Activated T-helper 1 cell treated with anti-CD3 and anti-CD28 coated beads, Interleukin-12 subunit alpha, Interleukin-12 subunit beta, Interleukin-2, Interleukin-4 antibody, amounts not matched to agents 30 ng/mL and 10 ng/mL and 1 ng/mL, durations not matched to agents 14 hours and 24 hours and 36 hours (primary cell): ENCODE measurements at regions of chr9 and their contacts with region 1.

Region 1: GRCh38 chr9:100598641-100599145 is 20.8 kb downstream of the CAVIN4 start:
- DNase-seq: peak; percentile 70
- H3K4me3 Mint-ChIP-seq: peak overlapping the region; percentile 78
- H3K27ac Mint-ChIP-seq: no peak overlapping the region
- H3K4me1 Mint-ChIP-seq: peaks cover 15% of the 10 kb centered on the region
- H3K27me3 Mint-ChIP-seq: peaks cover 20% of the 10 kb centered on the region

Region 2: GRCh38 chr9:99162759-99163364 is 1435.8 kb before region 1 on chr9:
- intact Hi-C with region 1: loop called (anchors 2 kb)
- DNase-seq: no peak
- H3K4me3 Mint-ChIP-seq: no peak overlapping the region
- H3K27ac Mint-ChIP-seq: no peak overlapping the region
- H3K4me1 Mint-ChIP-seq: peaks cover 25% of the 10 kb centered on the region
- H3K27me3 Mint-ChIP-seq: peaks cover 9% of the 10 kb centered on the region

Region 3: GRCh38 chr9:99906403-99907207 is 692.1 kb before region 1 on chr9 and contains the start of gene STX17:
- intact Hi-C with region 1: loop called (anchors 5 kb)
- DNase-seq: peak; percentile 72
- H3K4me3 Mint-ChIP-seq: peak within 1 kb of the TSS; percentile 96
- H3K27ac Mint-ChIP-seq: peak within 1 kb of the TSS; percentile 96
- H3K4me1 Mint-ChIP-seq: peaks cover 33% of the 10 kb centered on the region
- H3K27me3 Mint-ChIP-seq: peaks cover 13% of the 10 kb centered on the region
- total RNA-seq, gene STX17: 20.5 and 22.1 TPM in 2 replicates

Region 4: DNA sequence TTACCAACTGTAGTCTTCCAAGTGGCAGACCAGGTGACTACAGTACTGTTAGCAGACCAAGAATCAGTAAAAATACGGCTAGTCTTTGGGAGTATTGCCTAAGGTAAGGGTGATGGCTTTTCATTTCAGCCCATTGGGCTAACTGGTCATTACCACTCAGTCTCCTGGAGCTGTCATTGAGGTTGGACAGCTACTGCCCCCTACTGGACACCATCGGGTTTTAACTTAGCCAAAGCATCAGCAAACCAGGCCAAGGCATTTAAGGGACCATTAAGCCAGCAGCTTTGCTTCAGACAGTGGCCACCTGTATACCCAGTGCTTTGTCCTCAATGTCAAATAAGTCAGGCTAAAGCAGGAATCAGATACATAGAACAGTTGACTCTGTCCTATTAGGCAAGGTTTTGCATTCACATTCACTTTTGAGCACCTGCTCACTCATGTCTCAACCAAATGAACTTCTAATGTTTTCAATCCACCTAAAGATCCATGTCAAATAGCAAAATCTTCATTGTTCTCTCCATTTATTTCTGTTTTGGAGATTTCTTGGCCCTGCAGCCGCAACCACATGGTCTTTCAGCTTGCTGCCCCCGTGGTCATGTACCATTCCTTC is 382.4 kb before region 1 on chr9:
- intact Hi-C with region 1: loop called (anchors 1 kb)
- DNase-seq: peak; percentile 46
- H3K4me3 Mint-ChIP-seq: no peak overlapping the region
- H3K27ac Mint-ChIP-seq: no peak overlapping the region
- H3K4me1 Mint-ChIP-seq: peaks cover 12% of the 10 kb centered on the region
- H3K27me3 Mint-ChIP-seq: no peaks in the 10 kb centered on the region

Region 5: DNA sequence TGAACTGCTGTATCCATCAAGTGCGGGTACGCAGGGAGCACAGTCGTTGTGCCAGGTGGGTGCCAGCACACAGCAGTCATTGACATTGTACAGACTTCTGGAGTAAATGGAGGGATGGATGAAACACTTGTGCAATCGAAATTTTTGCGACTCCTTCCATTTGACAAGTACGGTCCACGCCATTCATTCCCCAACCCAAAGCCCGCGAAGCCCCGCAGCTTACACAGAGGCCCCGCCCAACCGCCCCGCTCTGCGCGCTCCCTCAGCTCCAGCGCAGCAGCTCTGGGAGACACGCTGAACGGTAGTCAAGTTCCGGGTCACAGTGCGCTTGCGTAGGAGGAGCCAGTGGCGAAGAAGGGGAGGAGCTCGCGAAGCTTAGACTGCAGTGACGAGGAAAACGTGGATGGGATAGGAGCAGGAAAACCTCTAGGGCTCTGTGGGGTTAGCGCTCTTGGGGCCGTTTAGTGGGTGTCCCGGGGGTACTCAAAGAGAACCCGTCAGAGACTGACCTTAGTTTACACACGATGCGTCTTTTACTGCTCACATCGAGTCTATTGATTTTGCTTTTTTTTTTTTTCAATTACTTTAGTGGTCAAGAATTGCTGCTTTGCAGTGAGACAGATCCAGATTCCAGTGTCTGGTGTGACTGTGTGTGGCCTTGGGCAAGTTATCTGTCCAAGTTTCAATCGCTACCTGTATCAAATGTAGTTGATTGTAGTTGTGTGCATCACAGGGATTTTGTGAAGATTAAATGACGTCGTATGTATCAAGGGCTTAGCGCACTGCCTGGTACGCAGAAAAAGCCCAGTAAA is 187.0 kb before region 1 on chr9:
- intact Hi-C with region 1: loop called (anchors 1 kb)
- DNase-seq: peak; percentile 81
- H3K4me3 Mint-ChIP-seq: peak overlapping the region; percentile 83
- H3K27ac Mint-ChIP-seq: peak overlapping the region; percentile 65
- H3K4me1 Mint-ChIP-seq: peaks cover 13% of the 10 kb centered on the region
- H3K27me3 Mint-ChIP-seq: peaks cover 11% of the 10 kb centered on the region

Region 6: DNA sequence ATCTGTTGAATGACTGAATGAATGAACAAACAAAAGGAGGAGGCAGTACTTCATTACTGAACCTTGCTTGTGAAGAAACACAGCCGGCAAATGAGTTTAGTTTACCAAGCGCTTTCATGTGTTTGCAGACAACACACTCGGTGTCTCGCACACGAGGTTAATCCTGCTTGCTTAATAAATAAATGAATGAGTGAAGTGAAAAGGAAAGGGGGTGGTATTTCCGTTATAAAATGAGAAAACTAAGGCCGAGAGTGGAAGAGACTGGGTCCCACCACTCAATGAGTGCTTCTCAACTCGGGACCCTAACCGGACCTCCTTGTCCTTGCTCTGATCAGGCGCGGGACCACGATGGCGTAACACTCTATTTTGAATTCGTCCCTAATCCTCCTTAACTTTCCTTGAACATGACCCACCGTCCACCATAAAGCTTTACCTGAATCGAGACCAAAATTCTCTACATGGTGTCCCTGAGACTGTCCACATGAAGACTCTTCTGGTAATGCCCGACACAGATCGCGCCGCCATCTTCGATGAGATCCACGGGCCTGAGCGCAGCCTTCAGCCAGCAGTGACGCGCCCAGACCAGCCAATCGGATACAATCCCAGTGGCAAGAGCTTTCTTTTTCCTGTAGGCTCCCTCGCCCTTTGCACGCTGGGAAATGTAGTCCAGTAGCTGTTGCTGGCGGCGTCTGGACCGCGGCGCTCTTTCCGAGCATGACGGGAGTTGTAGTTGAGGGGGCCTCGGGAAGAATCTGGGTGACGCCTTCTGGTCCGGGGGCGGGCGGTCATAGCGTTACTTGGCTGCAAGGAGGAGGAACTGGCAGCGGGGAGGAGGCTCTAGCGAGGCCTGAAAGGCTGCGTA is 799.6 kb after region 1 on chr9 and contains the starts of genes MRPL50 and ZNF189:
- intact Hi-C with region 1: loop called (anchors 1 kb)
- DNase-seq: peak; percentile 95
- H3K4me3 Mint-ChIP-seq: peak within 1 kb of the TSS; percentile 98
- H3K27ac Mint-ChIP-seq: peak within 1 kb of the TSS; percentile 99
- H3K4me1 Mint-ChIP-seq: peaks cover 45% of the 10 kb centered on the region
- H3K27me3 Mint-ChIP-seq: no peaks in the 10 kb centered on the region
- total RNA-seq, gene MRPL50: 16.3 and 16.6 TPM in 2 replicates
- total RNA-seq, gene ZNF189: 11.7 and 11.8 TPM in 2 replicates